CD4-positive, alpha-beta T cell (primary cell): ENCODE measurements at regions of chr14 and their contacts with region 1.

Region 1: GRCh38 chr14:74824997-74825396 is 50.9 kb downstream of the PROX2 start:
- DNase-seq: no peak
- ATAC-seq: no peak
- H3K4me3 ChIP-seq: no peak overlapping the region
- H3K4me3 Mint-ChIP-seq: no peak overlapping the region
- H3K27ac ChIP-seq: no peak overlapping the region
- H3K27ac Mint-ChIP-seq: no peak overlapping the region
- H3K4me1 ChIP-seq: no peaks in the 10 kb centered on the region
- H3K4me1 Mint-ChIP-seq: no peaks in the 10 kb centered on the region
- H3K27me3 ChIP-seq: no peaks in the 10 kb centered on the region
- H3K27me3 Mint-ChIP-seq: no peaks in the 10 kb centered on the region
- CTCF ChIP-seq: no peak

Region 2: GRCh38 chr14:75999511-76000190 is 1174.7 kb after region 1 on chr14:
- CTCF ChIA-PET with region 1: no interaction called
- POLR2A ChIA-PET with region 1: no interaction called
- intact Hi-C with region 1: loop called in 1 of 2 experiments (anchors 5 kb)
- DNase-seq: no peak
- ATAC-seq: no peak
- H3K4me3 ChIP-seq: no peak overlapping the region
- H3K4me3 Mint-ChIP-seq: no peak overlapping the region
- H3K27ac ChIP-seq: no peak overlapping the region
- H3K27ac Mint-ChIP-seq: no peak overlapping the region
- H3K4me1 ChIP-seq: no peaks in the 10 kb centered on the region
- H3K4me1 Mint-ChIP-seq: no peaks in the 10 kb centered on the region
- H3K27me3 ChIP-seq: no peaks in the 10 kb centered on the region
- H3K27me3 Mint-ChIP-seq: no peaks in the 10 kb centered on the region
- CTCF ChIP-seq: no peak